ENCODE measurements at regions of chr18 and their contacts with region 1.

Region 1: GRCh38 chr18:70205421-70206397 is at the start of gene RTTN:
- DNase-seq: peak; percentile 85
- CTCF ChIP-seq: no peak

Region 2: GRCh38 chr18:70301667-70302066 is 96.0 kb after region 1 on chr18:
- in situ Hi-C with region 1: no loop called
- DNase-seq: no peak
- CTCF ChIP-seq: no peak

Region 3: GRCh38 chr18:70349316-70349715 is 143.6 kb after region 1 on chr18:
- in situ Hi-C with region 1: no loop called
- DNase-seq: no peak
- CTCF ChIP-seq: no peak

Region 4: DNA sequence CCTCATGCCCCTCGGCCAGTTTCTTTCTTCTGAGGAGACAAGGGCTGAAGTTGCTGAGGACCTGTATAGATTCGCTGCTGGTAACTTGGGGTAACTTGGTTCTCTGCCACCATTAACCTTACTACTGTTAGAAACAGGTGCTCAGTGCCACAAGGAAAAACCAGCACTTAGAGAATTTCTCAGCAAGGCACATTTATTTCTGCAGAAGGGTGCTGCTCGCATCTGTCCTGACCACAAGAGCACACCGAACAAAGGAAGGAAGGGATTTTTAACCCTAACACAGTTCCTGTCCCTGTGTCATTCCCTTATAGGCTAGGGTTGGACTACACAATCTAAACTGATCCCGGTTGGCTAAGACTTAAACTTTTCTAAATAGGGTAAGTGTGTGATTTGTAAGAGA is 237.2 kb after region 1 on chr18:
- in situ Hi-C with region 1: loop called (anchors 10 kb)
- DNase-seq: no peak
- CTCF ChIP-seq: no peak